ENCODE measurements at regions of chr16 and their contacts with region 1.

Region 1: DNA sequence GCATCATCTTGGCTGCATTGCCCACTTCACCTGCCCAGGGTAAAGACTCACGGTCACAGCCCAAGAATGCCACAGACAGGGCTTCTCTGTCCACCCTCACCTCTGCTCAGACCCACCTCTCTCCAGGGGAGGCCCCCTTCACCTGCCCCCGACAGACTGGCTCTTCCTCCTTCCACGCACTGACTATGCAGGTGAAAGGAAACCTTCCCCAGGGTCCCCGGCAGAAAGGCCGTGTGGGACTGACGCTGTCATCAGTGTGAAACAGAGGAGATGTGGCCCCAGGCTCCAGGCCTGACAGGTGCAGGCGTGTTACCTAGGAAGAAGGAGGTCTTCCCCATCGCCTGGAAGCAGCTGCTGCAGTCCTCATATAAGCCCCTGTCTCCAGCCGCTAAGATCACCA is 9.3 kb upstream of the ROGDI start:
- H3K4me3 ChIP-seq: no peak overlapping the region
- H3K27ac ChIP-seq: no peak overlapping the region
- H3K4me1 ChIP-seq: no peaks in the 10 kb centered on the region
- CTCF ChIP-seq: no peak

Region 2: DNA sequence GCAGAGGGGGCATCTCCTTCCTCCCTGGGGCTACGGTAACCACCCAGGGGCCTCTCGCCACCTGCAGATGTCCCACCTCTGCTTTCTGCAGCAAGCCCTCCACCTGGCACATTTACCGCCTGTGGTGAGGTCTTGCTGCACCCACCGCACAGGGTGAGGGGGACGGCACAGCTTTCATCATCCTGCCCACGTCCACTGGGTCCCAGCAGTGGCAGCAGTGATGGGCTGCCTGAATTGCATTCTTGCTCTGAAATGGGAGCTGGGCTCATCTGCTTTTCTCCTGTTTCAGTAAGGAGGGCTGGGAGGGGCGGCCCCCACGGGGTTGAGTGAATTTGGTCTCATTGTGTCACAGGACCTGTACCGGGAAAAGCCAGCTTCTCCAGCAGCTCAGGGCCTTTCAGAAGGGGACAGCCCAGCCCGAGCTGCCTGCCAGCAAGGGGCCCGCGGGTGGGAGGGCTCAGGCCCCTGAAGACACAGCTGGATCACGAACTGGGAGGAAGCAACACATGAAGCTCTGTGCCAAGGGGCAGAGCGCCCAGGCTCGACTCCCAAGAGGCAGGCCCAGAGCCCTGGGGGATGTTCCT is 64.7 kb before region 1 on chr16:
- CTCF ChIA-PET with region 1: no interaction called
- POLR2A ChIA-PET with region 1: interaction called, 10 read pairs
- H3K4me3 ChIP-seq: no peak overlapping the region
- H3K27ac ChIP-seq: no peak overlapping the region
- H3K4me1 ChIP-seq: no peaks in the 10 kb centered on the region
- CTCF ChIP-seq: no peak

Region 3: DNA sequence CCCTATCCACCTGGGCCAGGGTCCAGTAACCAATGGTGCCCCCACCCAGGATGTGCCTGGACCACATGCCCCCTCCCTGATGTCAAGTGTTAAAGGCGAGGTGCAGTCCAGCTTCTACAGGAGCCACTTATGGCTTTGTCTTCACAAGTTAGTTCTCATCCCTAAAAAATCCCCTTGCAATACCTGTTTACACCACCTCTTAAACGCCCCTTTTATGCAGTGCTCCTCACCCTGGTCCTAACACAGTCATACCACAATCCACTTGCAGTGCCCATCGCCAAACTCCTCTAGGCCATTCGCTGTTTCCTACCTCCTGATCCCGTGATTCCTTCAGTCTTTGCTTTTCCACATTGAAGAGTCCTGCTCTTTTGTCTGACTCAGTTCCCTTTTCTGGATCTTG is 28.2 kb after region 1 on chr16:
- CTCF ChIA-PET with region 1: no interaction called
- POLR2A ChIA-PET with region 1: no interaction called
- H3K4me3 ChIP-seq: no peak overlapping the region
- H3K27ac ChIP-seq: no peak overlapping the region
- H3K4me1 ChIP-seq: no peaks in the 10 kb centered on the region
- CTCF ChIP-seq: no peak

Region 4: DNA sequence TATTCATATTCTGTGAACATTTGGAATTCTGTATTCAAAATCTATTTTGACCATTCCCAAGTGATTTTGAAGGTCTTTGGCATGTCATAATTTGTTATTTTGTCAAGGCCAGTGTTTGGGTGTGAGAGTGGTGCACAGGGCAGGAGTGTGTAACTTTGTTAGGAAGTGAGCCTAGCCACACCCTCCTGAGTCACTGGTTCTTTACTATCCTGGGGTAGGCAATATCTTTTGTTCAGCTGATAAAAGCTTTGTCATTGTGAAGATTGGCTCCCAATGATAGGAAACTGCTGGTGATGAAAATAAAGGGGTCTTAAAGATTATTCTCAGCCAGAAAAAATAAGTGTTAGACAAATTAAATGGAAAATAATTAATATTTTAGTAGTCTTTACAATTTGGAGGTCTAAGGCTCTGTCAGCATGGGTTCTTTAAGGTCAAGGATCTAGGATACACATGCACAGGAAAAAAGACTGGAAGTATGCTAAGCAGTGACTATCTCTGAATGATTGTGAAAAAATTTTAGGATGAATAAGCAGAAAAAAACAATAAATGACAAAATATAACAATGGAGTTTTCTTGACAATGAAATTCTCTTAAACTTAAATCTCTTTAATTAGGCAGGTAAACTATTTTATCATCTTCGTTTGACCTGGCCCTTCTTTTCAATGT is 40.6 kb after region 1 on chr16:
- CTCF ChIA-PET with region 1: no interaction called
- POLR2A ChIA-PET with region 1: no interaction called
- H3K4me3 ChIP-seq: no peak overlapping the region
- H3K27ac ChIP-seq: no peak overlapping the region
- H3K4me1 ChIP-seq: peaks cover 11% of the 10 kb centered on the region
- CTCF ChIP-seq: no peak

Measured in HEK293 (cell line).